Activated naive CD4-positive, alpha-beta T cell treated with anti-CD3 and anti-CD28 coated beads for 36 hours (primary cell): ENCODE measurements at regions of chr6 and their contacts with region 1.

Region 1: GRCh38 chr6:46410334-46410953 is 80.8 kb downstream of the RCAN2 start:
- DNase-seq: peak; percentile 53
- H3K4me3 Mint-ChIP-seq: no peak overlapping the region
- H3K27ac Mint-ChIP-seq: no peak overlapping the region
- H3K4me1 Mint-ChIP-seq: no peaks in the 10 kb centered on the region
- H3K27me3 Mint-ChIP-seq: no peaks in the 10 kb centered on the region

Region 2: DNA sequence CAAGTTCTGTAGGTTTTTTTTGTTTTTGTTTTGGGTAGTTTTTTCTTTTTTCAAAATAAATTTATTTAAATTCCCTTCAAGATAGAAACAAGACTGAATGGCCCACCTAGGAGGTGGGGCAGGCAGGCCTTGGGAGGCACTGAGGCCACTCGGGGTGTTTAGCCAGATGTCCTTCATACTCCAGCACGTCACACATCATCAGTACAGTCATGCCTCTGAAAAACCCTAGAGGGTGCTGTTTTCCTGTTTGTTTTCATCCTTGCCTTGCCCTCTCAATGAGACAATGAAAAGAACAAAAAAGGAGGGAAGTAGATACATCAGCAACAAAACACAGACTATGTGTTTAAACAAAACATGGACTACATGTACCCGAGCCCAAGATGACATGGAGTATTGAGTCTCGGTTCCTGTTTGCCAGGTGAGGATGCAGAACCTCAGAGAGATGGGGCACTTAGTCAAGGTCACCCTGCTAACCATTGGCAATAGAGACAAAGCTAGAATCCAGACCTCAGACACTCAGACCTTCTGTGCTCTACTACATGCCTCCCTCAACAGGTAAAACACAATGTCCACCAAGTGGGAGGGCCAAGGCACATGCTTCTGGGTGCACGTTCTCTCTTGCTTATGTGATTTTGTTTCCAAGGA is 368.0 kb before region 1 on chr6:
- CTCF ChIA-PET with region 1: no interaction called
- intact Hi-C with region 1: loop called (anchors 1 kb)
- DNase-seq: peak; percentile 20
- H3K4me3 Mint-ChIP-seq: no peak overlapping the region
- H3K27ac Mint-ChIP-seq: no peak overlapping the region
- H3K4me1 Mint-ChIP-seq: peaks cover 4% of the 10 kb centered on the region
- H3K27me3 Mint-ChIP-seq: no peaks in the 10 kb centered on the region

Region 3: GRCh38 chr6:46592046-46592445 is 181.6 kb after region 1 on chr6:
- CTCF ChIA-PET with region 1: no interaction called
- intact Hi-C with region 1: no loop called
- DNase-seq: no peak
- H3K4me3 Mint-ChIP-seq: no peak overlapping the region
- H3K27ac Mint-ChIP-seq: no peak overlapping the region
- H3K4me1 Mint-ChIP-seq: no peaks in the 10 kb centered on the region
- H3K27me3 Mint-ChIP-seq: peaks cover 21% of the 10 kb centered on the region